Heart left ventricle (tissue), 16 donors: ENCODE measurements at regions of chr16 and their contacts with region 1.

Region 1: DNA sequence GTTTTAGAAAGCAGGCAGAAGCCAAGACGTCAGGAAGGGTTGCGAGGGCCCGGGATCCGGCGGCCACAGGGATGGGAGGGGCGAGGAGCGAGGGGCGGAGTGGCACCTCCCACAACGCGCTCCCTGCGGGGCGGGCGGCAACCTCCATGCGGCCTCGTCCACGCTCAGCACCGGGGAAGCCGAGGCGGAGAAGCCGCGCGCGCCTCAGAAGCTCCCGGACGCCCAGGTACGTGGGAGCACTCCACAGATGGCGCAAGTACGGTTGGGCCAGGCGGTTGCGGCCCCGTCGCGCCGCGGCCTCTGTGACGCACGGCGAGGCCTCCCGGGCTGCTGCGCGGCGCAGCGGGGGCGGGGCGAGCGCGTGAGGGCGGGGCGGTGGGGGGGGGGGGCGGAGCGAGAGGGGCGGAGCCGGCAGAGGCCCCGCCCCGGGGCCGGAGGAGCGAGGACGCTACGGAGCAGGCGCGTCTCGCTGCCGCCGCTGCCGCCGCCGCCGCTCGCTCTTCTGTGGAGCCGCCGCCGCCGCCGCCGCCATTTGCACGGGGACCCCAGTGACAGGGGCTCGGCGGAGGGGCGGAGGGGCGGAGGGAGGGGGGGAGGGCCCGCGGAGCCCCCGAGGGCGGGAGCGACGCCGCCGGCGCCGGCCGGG is at the start of gene TENT4B:
- DNase-seq: peak; percentile 90 to 94 (median 91)
- ATAC-seq: peak; percentile 80 to 95 (median 94)
- H3K4me3 ChIP-seq: peak within 1 kb of the TSS; percentile 67 to 98 (median 86)
- H3K27ac ChIP-seq: peak within 1 kb of the TSS; percentile 89 to 99 (median 96)
- H3K4me1 ChIP-seq: peaks cover 0 to 39% (median 20%) of the 10 kb centered on the region in 12 donors
- H3K27me3 ChIP-seq: no peaks in the 10 kb centered on the region
- CTCF ChIP-seq: no peak
- POLR2A ChIP-seq: peak in 1 of 2 donors; percentile 74
- total RNA-seq, gene TENT4B: 4.8 to 8.8 (median 7.0) TPM

Region 2: DNA sequence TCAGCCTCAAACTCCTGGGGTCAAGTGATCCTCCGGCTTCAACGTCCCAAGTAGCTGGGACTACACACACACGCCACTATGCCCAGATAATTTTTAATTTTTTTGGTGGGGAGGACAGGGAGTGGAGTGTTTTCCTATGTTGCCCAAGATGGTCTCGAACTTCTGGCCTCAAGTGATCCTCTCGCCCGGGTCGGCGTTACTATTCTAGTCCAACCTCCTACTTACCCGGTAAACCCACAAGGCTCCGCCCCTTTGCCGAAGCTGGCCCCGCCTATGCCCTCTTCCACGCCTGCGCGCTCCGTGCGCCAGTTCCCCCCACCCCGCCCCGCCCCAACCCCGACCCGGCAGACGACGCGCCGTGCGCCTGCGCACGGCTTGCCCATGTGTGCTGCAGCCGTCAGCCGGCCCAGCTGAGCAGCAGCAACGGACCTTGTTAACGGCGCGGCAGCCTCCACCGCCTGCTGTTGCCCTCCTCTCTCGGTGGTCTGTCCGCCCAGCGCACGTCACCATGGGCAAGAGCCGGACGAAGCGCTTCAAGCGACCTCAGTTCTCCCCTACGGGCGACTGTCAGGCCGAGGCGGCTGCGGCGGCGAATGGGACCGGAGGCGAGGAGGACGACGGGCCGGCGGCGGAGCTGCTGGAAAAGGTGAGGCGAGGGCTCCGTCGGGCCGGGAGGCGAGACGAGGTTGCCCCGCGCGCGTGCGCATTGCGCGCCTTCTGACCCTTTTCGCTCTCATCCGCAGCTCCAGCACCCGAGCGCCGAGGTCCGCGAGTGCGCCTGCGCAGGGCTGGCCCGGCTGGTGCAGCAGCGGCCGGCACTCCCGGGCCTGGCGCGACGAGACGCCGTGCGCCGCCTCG is 87.1 kb before region 1 on chr16 and contains the start of gene HEATR3:
- intact Hi-C with region 1: loop called in 9 of 10 experiments (anchors 1 to 10 kb)
- DNase-seq: peak; percentile 91 to 97 (median 94)
- ATAC-seq: peak; percentile 95 to 98 (median 96)
- H3K4me3 ChIP-seq: peak within 1 kb of the TSS; percentile 70 to 100 (median 91)
- H3K27ac ChIP-seq: peak within 1 kb of the TSS; percentile 81 to 100 (median 98)
- H3K4me1 ChIP-seq: peaks cover 0 to 32% (median 22%) of the 10 kb centered on the region in 12 donors
- H3K27me3 ChIP-seq: no peaks in the 10 kb centered on the region
- CTCF ChIP-seq: peak in 1 of 12 donors; percentile 22
- POLR2A ChIP-seq: peak in 1 of 2 donors; percentile 49
- total RNA-seq, gene HEATR3: 9.5 to 21.2 (median 11.9) TPM

Region 3: GRCh38 chr16:50202926-50203624 is 50.1 kb after region 1 on chr16:
- intact Hi-C with region 1: loop called in 2 of 10 experiments (anchors 5 to 10 kb)
- DNase-seq: no peak
- ATAC-seq: peak; percentile 13 to 77 (median 53)
- H3K4me3 ChIP-seq: no peak overlapping the region
- H3K27ac ChIP-seq: peak overlapping the region in 10 of 12 donors; percentile 3 to 74 (median 34)
- H3K4me1 ChIP-seq: peaks cover 0 to 72% (median 51%) of the 10 kb centered on the region in 12 donors
- H3K27me3 ChIP-seq: no peaks in the 10 kb centered on the region
- CTCF ChIP-seq: no peak
- POLR2A ChIP-seq: no peak

Region 4: DNA sequence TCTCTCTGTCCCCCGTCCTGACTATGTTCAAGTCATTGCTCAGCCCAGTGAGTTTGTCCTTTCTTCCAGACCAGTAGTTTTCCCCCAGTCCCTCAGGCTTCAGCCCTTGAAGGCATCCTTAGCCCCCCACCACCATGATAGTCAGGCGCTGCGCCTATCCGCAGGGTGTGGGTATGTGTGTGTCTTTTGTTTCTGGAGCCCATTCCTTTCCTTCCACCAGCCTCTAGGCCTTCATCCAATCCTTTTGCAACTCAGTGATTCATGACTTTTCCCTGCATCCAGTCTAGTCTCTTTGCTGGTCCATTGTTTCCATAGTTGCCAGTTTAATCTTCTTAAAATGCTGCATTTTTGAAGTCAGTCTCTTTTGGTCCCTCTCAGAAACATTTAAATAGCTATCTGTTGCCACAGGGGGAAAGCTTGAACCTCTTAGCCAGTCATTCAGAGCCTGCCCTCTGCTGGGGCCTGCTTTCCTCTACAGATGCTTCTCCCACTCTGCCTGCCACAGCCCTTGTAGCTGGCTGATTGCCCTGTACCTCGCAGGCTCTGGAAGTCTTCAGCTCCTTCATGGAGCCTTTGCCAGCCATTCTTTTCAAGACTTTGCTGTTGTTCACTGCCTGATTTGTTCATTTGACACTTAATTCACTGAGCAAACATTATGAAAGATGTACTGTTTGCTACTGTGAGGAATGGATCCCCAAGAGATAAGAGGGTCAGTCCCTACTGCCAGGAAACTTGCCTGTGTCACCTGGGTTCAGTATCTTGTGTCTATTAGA is 57.5 kb after region 1 on chr16:
- intact Hi-C with region 1: loop called in 8 of 10 experiments (anchors 2 to 10 kb)
- DNase-seq: peak; percentile 81 to 89 (median 82)
- ATAC-seq: peak; percentile 92 to 95 (median 94)
- H3K4me3 ChIP-seq: no peak overlapping the region
- H3K27ac ChIP-seq: peak overlapping the region in 3 of 12 donors; percentile 17 to 48 (median 40)
- H3K4me1 ChIP-seq: peaks cover 2 to 54% (median 37%) of the 10 kb centered on the region in 12 donors
- H3K27me3 ChIP-seq: no peaks in the 10 kb centered on the region
- CTCF ChIP-seq: peak; percentile 52 to 88 (median 71)
- POLR2A ChIP-seq: no peak

Region 5: DNA sequence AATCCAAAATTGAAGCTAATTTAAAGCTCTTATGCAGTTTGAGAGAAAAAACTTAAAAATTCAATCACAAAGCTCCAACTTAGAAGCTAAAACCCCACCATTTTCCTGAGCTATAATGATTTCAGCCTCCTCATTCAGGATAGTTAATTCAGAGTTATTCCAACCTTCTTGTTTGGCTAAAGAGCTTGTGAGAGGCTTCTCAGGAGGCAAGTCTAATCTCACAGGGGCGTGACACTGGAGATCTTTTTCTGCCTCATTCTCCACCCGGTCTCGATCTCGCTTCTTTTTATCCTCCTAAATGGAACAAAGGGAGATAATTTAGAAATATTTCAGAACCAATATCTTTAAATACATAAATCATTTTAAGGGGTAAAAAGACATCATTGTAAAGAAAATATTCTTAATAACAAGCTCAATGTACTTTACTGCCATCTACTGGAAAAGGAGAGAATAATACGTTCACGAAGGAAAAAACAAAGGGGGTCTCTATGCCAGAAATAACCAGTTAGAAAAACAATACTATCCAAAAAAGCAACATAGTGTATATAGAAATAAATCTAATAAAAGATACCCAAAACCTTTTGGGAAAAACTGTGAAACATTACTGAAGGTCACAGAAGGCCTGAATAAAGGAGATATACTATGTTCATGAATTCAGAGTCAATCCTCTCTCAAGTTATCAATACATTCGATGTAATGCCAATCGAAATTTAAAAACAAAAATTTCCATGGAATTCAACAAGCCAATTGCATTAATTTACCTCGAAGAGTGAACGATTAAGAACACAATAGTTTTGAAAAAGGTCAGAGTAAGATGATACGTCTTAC is 201.9 kb after region 1 on chr16:
- intact Hi-C with region 1: loop called in 2 of 10 experiments (anchors 5 to 10 kb)
- DNase-seq: no peak
- ATAC-seq: no peak
- H3K4me3 ChIP-seq: no peak overlapping the region
- H3K27ac ChIP-seq: peak overlapping the region in 2 of 12 donors; percentile 7 to 16
- H3K4me1 ChIP-seq: peaks cover 0 to 6% (median 0%) of the 10 kb centered on the region in 12 donors
- H3K27me3 ChIP-seq: no peaks in the 10 kb centered on the region
- CTCF ChIP-seq: peak; percentile 38 to 73 (median 61)
- POLR2A ChIP-seq: no peak

Region 6: DNA sequence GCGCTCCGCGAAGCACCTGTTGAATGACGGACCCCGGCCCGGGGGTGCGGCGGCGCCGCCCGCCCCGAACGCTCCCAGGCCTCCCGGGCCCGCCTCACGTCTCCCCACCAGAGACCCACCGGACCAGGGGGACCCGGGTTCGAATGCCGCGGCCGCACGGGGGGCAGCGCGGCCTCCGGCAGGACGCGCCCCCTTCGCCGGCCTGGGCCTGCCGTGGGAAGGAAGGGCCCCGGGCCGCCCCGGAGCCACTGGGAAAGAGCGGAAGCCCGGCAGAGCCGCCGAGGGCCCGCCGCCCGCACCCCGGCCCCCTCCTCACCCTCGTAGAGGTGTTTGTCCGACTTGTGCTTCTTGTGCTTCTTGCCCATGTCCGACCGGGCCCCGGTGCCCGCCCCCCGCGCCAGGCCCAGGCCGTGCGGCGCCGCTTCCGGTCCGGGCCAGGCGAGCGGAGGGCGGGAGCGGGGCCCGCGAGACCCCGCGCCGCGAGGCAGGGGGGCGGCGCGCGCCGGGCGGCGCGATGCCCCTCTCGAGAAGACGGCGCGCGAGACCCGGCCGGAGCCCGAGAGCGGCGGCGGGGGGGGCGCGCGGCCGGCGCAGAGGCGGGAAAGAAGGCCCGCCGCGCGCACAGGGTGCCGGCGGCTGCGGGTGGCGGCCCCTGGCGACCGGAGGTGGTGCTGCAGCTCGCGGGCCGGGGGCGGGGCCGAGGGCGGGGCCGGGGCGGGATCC is 215.6 kb after region 1 on chr16 and contains the start of gene BRD7:
- intact Hi-C with region 1: loop called in 1 of 10 experiments (anchors 5 kb)
- DNase-seq: peak; percentile 54 to 85 (median 70)
- ATAC-seq: peak; percentile 34 to 85 (median 68)
- H3K4me3 ChIP-seq: peak within 1 kb of the TSS; percentile 78 to 99 (median 96)
- H3K27ac ChIP-seq: peak within 1 kb of the TSS in 11 of 12 donors; percentile 39 to 82 (median 65)
- H3K4me1 ChIP-seq: peaks cover 7 to 48% (median 22%) of the 10 kb centered on the region in 12 donors
- H3K27me3 ChIP-seq: no peaks in the 10 kb centered on the region
- CTCF ChIP-seq: peak in 10 of 12 donors; percentile 33 to 76 (median 60)
- POLR2A ChIP-seq: no peak
- total RNA-seq, gene BRD7: 29.8 to 49.7 (median 45.3) TPM